HCT116 (cell line): ENCODE measurements at regions of chr4 and their contacts with region 1.

Region 1: DNA sequence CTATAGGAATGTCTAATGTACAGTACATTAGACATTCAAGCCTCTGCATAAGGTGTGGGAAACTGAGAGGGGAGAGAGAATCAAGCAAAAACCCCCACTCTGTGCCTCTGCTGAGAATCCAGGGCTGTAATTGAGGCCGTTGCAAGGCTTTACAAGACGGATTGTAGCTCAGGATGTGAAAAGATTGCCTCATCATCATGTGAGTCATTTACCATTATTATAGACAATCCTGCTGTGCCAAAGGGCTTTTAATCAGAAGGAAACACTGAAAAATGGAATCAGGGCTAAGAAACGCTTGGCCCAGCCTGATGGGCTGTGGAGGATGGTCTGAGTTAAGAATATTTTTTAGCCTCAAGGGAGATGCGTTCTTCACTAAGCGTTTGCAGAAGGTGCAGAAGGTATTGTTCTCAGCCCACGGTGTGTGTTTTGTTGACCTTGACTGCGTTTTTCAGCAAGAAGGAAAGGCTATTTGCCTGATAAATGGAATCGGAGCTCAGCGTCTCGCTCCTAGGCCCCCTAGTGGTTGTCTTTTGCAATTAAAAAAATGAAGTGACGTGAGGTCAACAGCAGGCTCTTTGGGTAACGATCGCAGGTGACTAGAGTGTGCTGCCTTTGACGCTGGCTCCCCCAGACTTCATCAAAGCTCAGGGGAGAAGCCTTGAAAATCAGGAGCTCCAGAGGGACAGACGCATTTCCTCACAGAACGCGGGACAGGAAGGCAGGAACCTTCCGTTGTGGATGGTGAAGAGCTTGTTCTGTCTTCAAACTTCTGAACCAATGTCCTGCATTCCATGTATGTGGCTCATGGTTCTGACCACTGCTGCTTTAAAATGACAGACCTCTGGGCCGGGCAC is 18.1 kb upstream of the CHRNA9 start:
- DNase-seq: peak; percentile 80
- ATAC-seq: peak; percentile 88
- H3K4me3 ChIP-seq: peak overlapping the region; percentile 27 to 44
- H3K27ac ChIP-seq: peak overlapping the region; percentile 58
- H3K4me1 ChIP-seq: peaks cover 11 to 28% of the 10 kb centered on the region in 2 experiments; a peak in 3 of 4 replicates
- H3K27me3 ChIP-seq: no peaks in the 10 kb centered on the region
- CTCF ChIP-seq: peak; percentile 67 to 84 (median 73)
- POLR2A ChIP-seq: no peak
- RAD21 ChIP-seq: peak; percentile 69

Region 2: GRCh38 chr4:39814403-39815185 is 502.4 kb before region 1 on chr4:
- CTCF ChIA-PET with region 1: no interaction called
- POLR2A ChIA-PET with region 1: no interaction called
- RAD21 ChIA-PET with region 1: no interaction called
- intact Hi-C with region 1: loop called (anchors 5 kb)
- DNase-seq: peak; percentile 50
- ATAC-seq: peak; percentile 47
- H3K4me3 ChIP-seq: peak overlapping the region; percentile 6 to 52
- H3K27ac ChIP-seq: peak overlapping the region; percentile 79
- H3K4me1 ChIP-seq: peaks cover 21 to 32% of the 10 kb centered on the region in 2 experiments
- H3K27me3 ChIP-seq: no peaks in the 10 kb centered on the region
- CTCF ChIP-seq: no peak
- POLR2A ChIP-seq: no peak
- RAD21 ChIP-seq: no peak

Region 3: GRCh38 chr4:40333921-40334352 is 16.9 kb after region 1 on chr4:
- CTCF ChIA-PET with region 1: interaction called, 11 read pairs
- POLR2A ChIA-PET with region 1: interaction called, 11 read pairs
- RAD21 ChIA-PET with region 1: no interaction called
- intact Hi-C with region 1: no loop called
- DNase-seq: peak; percentile 69
- ATAC-seq: peak; percentile 81
- H3K4me3 ChIP-seq: peak overlapping the region in 1 of 2 experiments; percentile 32; a peak in 3 of 4 replicates
- H3K27ac ChIP-seq: peak overlapping the region; percentile 9; the same call in 1 of the 2 replicates
- H3K4me1 ChIP-seq: peaks cover 18 to 39% of the 10 kb centered on the region in 2 experiments
- H3K27me3 ChIP-seq: no peaks in the 10 kb centered on the region
- CTCF ChIP-seq: no peak
- POLR2A ChIP-seq: no peak
- RAD21 ChIP-seq: no peak

Region 4: GRCh38 chr4:40550948-40551462 is 234.0 kb after region 1 on chr4:
- CTCF ChIA-PET with region 1: no interaction called
- POLR2A ChIA-PET with region 1: no interaction called
- RAD21 ChIA-PET with region 1: no interaction called
- intact Hi-C with region 1: loop called (anchors 10 kb)
- DNase-seq: peak; percentile 38
- ATAC-seq: peak; percentile 72
- H3K4me3 ChIP-seq: peak overlapping the region; percentile 29 to 44
- H3K27ac ChIP-seq: peak overlapping the region; percentile 30; the same call in 1 of the 2 replicates
- H3K4me1 ChIP-seq: peaks cover 16 to 51% of the 10 kb centered on the region in 2 experiments; a peak in 3 of 4 replicates
- H3K27me3 ChIP-seq: no peaks in the 10 kb centered on the region
- CTCF ChIP-seq: peak; percentile 36 to 55 (median 44); a peak in 4 of 6 replicates
- POLR2A ChIP-seq: no peak
- RAD21 ChIP-seq: peak; percentile 62

Region 5: GRCh38 chr4:40594261-40595178 is 277.5 kb after region 1 on chr4:
- CTCF ChIA-PET with region 1: no interaction called
- POLR2A ChIA-PET with region 1: no interaction called
- RAD21 ChIA-PET with region 1: no interaction called
- intact Hi-C with region 1: no loop called
- DNase-seq: no peak
- ATAC-seq: no peak
- H3K4me3 ChIP-seq: no peak overlapping the region
- H3K27ac ChIP-seq: no peak overlapping the region
- H3K4me1 ChIP-seq: no peaks in the 10 kb centered on the region
- H3K27me3 ChIP-seq: no peaks in the 10 kb centered on the region
- CTCF ChIP-seq: no peak
- POLR2A ChIP-seq: no peak
- RAD21 ChIP-seq: no peak